Activated T-helper 2 cell treated with anti-CD3 and anti-CD28 coated beads, Interferon-gamma antibody, Interleukin-2, Interleukin-4, amounts not matched to agents 10 μg/mL and 5 μg/mL and 100 μg/mL, durations not matched to agents 14 hours and 24 hours and 36 hours (primary cell): ENCODE measurements at regions of chr16 and their contacts with region 1.

Region 1: GRCh38 chr16:11105038-11105903 is 150.7 kb downstream of the SOCS1 start:
- DNase-seq: peak; percentile 51
- H3K4me3 Mint-ChIP-seq: peak overlapping the region; percentile 55
- H3K27ac Mint-ChIP-seq: peak overlapping the region; percentile 92
- H3K4me1 Mint-ChIP-seq: peaks cover 82% of the 10 kb centered on the region
- H3K27me3 Mint-ChIP-seq: no peaks in the 10 kb centered on the region

Region 2: DNA sequence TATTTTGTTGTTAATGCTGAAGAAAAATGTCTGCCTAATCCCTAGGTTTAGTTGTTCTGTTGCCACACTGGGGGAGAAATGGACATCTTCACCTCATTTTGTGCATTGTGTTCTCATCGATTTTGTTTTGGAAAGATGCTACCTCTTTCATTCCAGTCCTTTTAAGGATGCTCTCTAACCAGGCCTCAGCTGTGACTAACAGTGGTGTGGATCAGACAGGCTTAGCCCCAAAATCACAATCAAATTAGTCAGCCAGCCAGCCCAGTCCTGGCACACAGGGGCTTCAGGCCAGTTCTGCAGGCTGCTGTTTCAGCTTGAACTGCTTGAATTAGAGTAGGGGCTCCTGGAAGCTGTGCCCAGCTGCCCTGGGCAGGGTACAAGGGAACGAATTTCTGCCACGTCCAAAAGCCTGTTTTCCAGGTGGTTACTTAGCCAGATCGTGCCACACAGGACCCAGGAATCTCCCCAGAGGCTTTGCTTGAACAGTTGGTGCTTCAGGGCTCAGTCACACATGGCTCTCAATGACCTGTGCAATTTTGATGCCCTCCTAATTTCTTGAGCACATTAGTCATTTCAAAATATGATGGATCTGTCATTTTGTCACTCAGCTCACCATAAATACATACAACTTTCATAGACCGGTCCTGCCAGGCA is 100.2 kb before region 1 on chr16:
- intact Hi-C with region 1: no loop called
- DNase-seq: no peak
- H3K4me3 Mint-ChIP-seq: no peak overlapping the region
- H3K27ac Mint-ChIP-seq: peak overlapping the region; percentile 38
- H3K4me1 Mint-ChIP-seq: peaks cover 33% of the 10 kb centered on the region
- H3K27me3 Mint-ChIP-seq: no peaks in the 10 kb centered on the region

Region 3: GRCh38 chr16:11051879-11052808 is 53.1 kb before region 1 on chr16:
- intact Hi-C with region 1: loop called (anchors 1 kb)
- DNase-seq: peak; percentile 83
- H3K4me3 Mint-ChIP-seq: peak overlapping the region; percentile 43
- H3K27ac Mint-ChIP-seq: peak overlapping the region; percentile 92
- H3K4me1 Mint-ChIP-seq: peaks cover 85% of the 10 kb centered on the region
- H3K27me3 Mint-ChIP-seq: no peaks in the 10 kb centered on the region

Region 4: DNA sequence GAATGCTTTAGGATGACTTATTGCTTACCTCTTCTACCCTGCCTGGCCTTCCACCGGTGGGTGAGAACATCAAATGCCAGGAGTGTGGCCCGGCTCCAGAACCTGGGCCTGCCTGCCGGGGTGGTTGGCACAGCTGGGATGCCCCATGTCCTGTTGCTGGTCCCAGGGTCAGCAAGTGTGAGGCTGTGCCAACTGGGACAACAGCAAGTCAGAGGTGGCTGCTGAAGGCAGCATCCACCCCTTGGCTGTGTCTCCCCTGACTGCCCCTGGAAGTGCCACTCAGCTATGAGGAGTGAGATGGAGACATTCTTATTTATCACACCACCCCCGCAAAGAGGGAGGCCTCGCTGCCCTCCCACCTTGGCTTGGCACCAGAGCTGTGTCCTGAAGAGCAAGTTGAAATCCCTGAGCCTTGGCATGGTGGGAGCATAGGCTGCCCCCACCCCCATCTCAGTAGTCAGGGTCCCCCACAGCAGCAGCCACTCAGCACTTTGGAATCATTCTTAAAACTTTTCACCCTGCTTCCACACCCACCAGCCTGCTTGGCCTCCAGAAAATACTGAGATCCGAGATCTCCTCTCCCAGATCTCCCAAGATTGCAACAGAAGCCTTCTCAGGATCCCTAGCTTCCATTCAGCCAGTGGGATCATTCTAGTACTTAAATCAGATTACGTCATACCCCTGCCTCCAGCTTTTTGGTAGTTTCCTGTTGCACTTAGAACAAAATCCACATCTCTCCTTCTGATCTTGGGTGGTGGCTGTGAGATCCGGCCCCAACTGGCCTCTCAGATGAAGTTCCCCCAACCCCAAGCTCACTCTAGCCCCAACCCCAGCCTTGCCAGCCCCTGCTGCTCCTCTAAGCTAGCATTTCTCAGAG is 23.2 kb after region 1 on chr16:
- intact Hi-C with region 1: loop called (anchors 1 kb)
- DNase-seq: peak; percentile 38
- H3K4me3 Mint-ChIP-seq: peak overlapping the region; percentile 60
- H3K27ac Mint-ChIP-seq: peak overlapping the region; percentile 96
- H3K4me1 Mint-ChIP-seq: peaks cover 76% of the 10 kb centered on the region
- H3K27me3 Mint-ChIP-seq: no peaks in the 10 kb centered on the region

Region 5: DNA sequence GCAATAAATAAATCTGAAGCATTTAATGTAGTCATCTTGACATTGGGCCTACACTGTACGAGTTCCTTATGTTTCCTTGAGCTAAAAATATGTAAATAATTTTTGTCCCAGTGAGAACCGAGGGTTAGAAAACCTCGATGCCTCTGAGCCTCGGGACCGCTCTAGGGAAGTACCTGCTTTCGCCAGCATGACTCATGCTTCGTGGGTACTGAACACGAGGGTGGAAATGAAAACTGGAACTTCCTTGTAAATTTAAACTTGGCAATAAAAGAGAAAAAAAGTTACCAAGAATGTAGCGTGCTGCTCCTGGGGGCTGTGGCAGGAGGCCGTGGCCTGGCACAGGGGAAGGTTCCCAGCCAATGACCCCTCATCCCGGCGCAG is 76.6 kb after region 1 on chr16:
- intact Hi-C with region 1: loop called (anchors 5 kb)
- DNase-seq: no peak
- H3K4me3 Mint-ChIP-seq: peak overlapping the region; percentile 47
- H3K27ac Mint-ChIP-seq: peak overlapping the region; percentile 88
- H3K4me1 Mint-ChIP-seq: peaks cover 58% of the 10 kb centered on the region
- H3K27me3 Mint-ChIP-seq: no peaks in the 10 kb centered on the region

Region 6: GRCh38 chr16:11232852-11233726 is 127.8 kb after region 1 on chr16:
- intact Hi-C with region 1: loop called (anchors 1 kb)
- DNase-seq: peak; percentile 91
- H3K4me3 Mint-ChIP-seq: peak overlapping the region; percentile 56
- H3K27ac Mint-ChIP-seq: peak overlapping the region; percentile 98
- H3K4me1 Mint-ChIP-seq: peaks cover 76% of the 10 kb centered on the region
- H3K27me3 Mint-ChIP-seq: no peaks in the 10 kb centered on the region